Cardiac septum (tissue), 1 donor: ENCODE measurements at regions of chr13 and their contacts with region 1.

Region 1: GRCh38 chr13:32019612-32020233 is 11.9 kb upstream of the FRY start:
- DNase-seq: no peak

Region 2: GRCh38 chr13:31824705-31825517 is 194.8 kb before region 1 on chr13:
- intact Hi-C with region 1: loop called (anchors 10 kb)
- DNase-seq: no peak

Region 3: DNA sequence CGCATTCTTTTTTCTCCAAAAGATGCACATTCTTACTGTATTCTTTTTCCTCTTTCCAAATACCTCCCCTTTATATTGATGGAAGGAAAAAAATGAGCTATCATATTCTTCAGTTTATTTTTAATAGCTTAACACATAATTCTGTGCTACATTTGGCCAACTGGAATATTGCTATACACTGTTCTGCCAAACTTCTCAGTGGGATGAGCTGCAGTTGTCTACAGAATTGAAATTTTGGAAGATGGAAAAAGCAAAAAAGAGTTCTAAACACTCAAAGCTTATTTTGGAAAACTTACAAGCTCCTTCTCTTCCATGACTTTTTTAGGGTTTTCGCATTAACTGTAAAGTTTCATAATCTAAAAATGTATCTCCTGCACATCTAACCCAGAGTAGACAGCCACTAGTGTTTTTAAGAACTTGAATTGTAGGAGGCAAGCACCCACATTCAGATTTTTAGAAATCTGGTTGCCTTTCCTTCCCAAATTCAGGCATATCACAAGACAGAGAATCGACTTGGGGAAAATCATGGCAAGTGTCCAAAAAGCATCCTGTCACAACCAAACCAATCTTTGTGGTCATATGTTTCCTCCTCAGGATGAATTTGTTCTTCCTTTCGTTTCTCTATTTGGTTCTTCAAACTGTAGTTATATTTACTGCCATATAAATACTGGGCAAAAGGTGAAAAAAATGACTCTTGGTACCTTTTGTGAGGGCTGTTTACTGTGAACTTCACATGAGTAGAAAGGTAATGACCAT is 99.6 kb before region 1 on chr13:
- intact Hi-C with region 1: loop called (anchors 5 kb)
- DNase-seq: no peak

Region 4: DNA sequence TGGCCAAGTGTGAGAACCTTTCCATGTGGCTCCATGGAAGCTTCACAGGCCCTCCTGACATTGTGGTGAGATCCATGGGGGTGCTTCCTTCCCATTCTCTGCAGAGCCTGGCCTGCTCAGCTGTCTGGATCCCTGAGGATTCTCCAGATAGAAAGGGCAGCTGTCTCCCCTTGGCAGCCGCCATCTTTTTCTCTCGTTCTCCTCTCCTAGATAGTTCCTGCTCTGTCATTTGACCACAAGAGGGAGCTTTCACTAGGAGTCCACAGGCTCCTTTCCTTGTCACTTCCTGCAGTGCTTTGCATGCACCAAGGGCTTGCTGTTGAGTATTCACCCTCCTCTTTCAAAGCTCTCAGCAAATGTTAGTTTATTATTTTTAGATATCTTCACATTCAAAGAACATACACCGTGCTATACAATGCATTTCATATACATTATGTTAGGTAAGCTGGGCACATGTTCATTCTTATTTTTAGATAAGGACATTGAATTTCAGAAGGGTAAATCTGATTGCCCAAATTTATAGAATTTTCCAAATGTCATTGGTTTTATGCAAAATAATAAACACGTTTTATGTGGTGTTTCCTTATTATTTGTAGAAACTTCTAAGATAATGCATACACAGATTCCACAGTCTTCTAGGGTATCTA is 145.0 kb after region 1 on chr13:
- intact Hi-C with region 1: loop called (anchors 5 kb)
- DNase-seq: no peak

Region 5: GRCh38 chr13:32310134-32310706 is 290.5 kb after region 1 on chr13:
- intact Hi-C with region 1: loop called (anchors 2 kb)
- DNase-seq: no peak